Activated CD4-positive, alpha-beta T cell treated with anti-CD3 and anti-CD28 coated beads for 36 hours (primary cell): ENCODE measurements at regions of chr17 and their contacts with region 1.

Region 1: DNA sequence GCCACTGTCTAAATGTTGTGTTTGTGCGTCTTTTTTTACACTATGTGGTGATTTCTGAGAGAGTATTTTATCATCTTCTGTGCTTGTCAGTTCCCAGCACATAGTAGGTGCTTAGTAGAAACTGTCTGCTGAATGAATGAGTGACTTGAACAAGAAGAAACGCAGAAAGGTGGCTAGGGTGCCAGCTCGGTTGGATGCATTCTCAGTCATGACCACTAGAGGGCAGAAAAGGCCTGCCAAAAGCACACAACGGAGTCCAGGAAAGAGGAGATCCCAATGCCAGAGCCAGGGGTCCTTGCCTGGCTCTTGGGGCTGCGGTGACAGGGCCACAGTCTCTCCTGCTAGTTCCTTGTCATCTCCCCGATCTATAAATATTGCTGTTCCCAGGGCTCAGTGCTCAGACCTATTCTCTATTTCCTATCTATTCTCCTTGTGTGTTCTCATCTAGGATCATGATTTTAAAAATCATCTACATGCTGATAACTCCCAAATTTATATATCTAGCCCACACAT is 57.3 kb upstream of the CCL1 start:
- DNase-seq: peak; percentile 78
- ATAC-seq: peak; percentile 55
- H3K4me3 Mint-ChIP-seq: no peak overlapping the region
- H3K27ac Mint-ChIP-seq: no peak overlapping the region
- H3K4me1 Mint-ChIP-seq: no peaks in the 10 kb centered on the region
- H3K27me3 Mint-ChIP-seq: peaks cover 27% of the 10 kb centered on the region

Region 2: DNA sequence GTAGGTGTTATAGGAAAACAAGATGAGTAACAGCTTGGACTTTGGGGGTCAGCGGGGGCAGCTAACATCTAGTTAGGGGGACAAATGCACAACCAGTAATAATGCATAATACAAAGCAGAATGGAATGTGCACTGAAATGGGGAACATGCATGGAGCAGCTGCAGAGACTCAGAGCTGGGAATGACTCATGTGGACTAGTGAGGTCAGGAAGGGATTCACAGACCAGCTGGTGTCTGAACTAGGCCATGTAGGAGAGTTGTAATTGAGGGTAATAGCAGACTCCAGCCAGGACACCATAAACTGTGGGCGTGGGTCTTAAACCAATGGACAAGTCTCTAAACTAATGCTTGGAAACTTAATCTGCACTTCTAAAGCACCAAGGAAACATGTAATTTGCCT is 950.4 kb before region 1 on chr17:
- CTCF ChIA-PET with region 1: no interaction called
- POLR2A ChIA-PET with region 1: no interaction called
- intact Hi-C with region 1: no loop called
- DNase-seq: no peak
- ATAC-seq: no peak
- H3K4me3 Mint-ChIP-seq: no peak overlapping the region
- H3K27ac Mint-ChIP-seq: no peak overlapping the region
- H3K4me1 Mint-ChIP-seq: no peaks in the 10 kb centered on the region
- H3K27me3 Mint-ChIP-seq: peaks cover 9% of the 10 kb centered on the region

Region 3: GRCh38 chr17:33964344-33964979 is 455.8 kb before region 1 on chr17:
- CTCF ChIA-PET with region 1: no interaction called
- POLR2A ChIA-PET with region 1: no interaction called
- intact Hi-C with region 1: no loop called
- DNase-seq: peak; percentile 23
- ATAC-seq: peak; percentile 76
- H3K4me3 Mint-ChIP-seq: no peak overlapping the region
- H3K27ac Mint-ChIP-seq: no peak overlapping the region
- H3K4me1 Mint-ChIP-seq: peaks cover 24% of the 10 kb centered on the region
- H3K27me3 Mint-ChIP-seq: peaks cover 5% of the 10 kb centered on the region

Region 4: DNA sequence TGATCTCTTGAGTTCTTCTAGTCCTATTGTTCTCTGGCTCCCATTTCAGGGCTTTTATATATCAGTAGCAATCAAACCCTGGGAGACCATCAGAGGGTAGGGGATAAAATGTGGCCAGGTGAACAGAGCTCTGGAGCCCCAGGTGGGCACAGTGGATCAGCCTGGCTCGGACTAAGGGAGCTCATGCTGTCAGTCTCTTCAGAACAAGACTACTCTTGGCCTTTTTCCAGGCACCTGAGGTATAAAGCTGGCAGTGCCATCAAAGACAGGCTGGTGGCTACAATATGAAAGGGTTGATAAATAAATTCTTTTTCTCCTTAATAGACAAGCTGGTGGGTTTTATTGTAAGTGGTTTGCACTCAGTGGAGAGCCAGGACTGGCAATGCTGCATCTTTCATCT is 325.2 kb before region 1 on chr17:
- CTCF ChIA-PET with region 1: no interaction called
- POLR2A ChIA-PET with region 1: no interaction called
- intact Hi-C with region 1: no loop called
- DNase-seq: no peak
- ATAC-seq: no peak
- H3K4me3 Mint-ChIP-seq: no peak overlapping the region
- H3K27ac Mint-ChIP-seq: no peak overlapping the region
- H3K4me1 Mint-ChIP-seq: no peaks in the 10 kb centered on the region
- H3K27me3 Mint-ChIP-seq: peaks cover 31% of the 10 kb centered on the region

Region 5: DNA sequence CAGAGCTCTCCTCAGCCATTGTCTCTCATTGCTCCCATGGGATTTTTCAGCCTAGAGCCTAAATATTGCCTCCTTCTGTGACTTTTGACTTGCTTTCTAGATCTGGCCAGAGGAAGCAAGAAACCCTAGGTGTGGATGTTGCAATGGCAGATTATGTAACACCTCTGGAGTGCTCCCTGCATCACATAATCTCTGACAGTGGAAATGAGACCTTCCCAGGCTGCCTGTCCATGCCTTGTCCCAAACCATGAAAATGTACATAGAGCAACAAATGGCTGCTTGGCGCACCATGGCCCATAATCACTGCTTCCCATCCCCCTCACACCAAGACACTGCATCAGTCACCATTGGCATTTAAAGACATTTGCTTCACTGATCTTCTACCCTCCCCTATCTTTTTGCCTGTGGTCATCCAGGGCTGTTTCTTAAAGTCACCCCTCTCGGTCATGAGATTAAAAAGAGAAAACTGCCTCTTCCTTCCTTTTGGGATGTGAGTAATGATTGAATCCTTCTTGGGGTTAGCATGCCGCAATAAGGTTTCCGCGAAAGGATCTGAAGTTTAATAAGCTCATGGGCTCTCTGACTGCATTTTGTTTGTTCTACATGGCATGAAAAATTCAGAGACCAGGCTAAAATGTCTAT is 199.4 kb before region 1 on chr17:
- CTCF ChIA-PET with region 1: no interaction called
- POLR2A ChIA-PET with region 1: no interaction called
- intact Hi-C with region 1: no loop called
- DNase-seq: no peak
- ATAC-seq: no peak
- H3K4me3 Mint-ChIP-seq: no peak overlapping the region
- H3K27ac Mint-ChIP-seq: no peak overlapping the region
- H3K4me1 Mint-ChIP-seq: no peaks in the 10 kb centered on the region
- H3K27me3 Mint-ChIP-seq: peaks cover 34% of the 10 kb centered on the region

Region 6: DNA sequence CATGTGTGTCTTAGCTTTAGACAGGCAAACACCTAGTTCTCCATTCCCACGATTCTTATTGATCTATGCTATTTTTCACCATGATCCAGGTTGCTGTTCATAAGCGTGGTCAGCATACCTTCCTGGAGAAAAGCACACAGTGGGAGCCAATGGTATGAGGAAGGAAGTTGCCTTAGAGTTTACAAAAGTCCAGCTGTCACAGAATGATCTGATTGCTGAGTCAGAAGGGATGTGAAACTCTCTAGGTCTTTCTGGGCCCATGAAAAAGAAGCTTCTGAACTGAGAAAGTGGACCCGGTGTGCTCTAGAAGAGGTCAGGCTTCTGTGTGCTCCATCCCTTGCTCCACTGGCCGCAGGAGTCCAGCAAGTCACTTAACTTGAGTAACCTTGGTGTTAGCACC is 13.7 kb after region 1 on chr17:
- CTCF ChIA-PET with region 1: interaction called, 14 read pairs
- POLR2A ChIA-PET with region 1: no interaction called
- intact Hi-C with region 1: no loop called
- DNase-seq: no peak
- ATAC-seq: no peak
- H3K4me3 Mint-ChIP-seq: no peak overlapping the region
- H3K27ac Mint-ChIP-seq: no peak overlapping the region
- H3K4me1 Mint-ChIP-seq: no peaks in the 10 kb centered on the region
- H3K27me3 Mint-ChIP-seq: peaks cover 2% of the 10 kb centered on the region

Region 7: DNA sequence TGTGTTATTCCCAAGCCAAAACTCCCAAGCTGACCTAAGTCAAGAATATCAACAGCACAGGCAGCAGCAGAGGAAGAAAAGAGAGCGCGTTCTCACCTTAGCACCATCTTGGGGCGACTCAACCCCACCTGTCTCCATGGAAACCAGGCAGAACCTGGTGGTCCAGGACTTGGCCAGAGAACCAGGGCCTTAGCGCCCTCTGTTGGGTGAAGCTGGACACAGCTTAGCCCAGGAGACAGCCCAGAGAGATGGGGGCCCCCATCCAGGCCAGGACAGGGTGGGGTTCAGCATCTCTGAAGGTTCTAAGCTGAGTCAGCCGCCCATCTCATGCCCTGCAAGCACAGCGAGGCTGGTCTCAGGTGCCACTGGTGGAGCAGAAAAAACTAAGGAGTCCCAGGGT is 99.0 kb after region 1 on chr17:
- CTCF ChIA-PET with region 1: interaction called, 3 read pairs
- POLR2A ChIA-PET with region 1: no interaction called
- intact Hi-C with region 1: loop called (anchors 1 to 5 kb)
- DNase-seq: peak; percentile 44
- ATAC-seq: peak; percentile 51
- H3K4me3 Mint-ChIP-seq: no peak overlapping the region
- H3K27ac Mint-ChIP-seq: no peak overlapping the region
- H3K4me1 Mint-ChIP-seq: no peaks in the 10 kb centered on the region
- H3K27me3 Mint-ChIP-seq: peaks cover 7% of the 10 kb centered on the region

Region 8: GRCh38 chr17:34637548-34638525 is 217.5 kb after region 1 on chr17:
- CTCF ChIA-PET with region 1: interaction called, 7 read pairs
- POLR2A ChIA-PET with region 1: no interaction called
- intact Hi-C with region 1: loop called (anchors 1 kb)
- DNase-seq: peak; percentile 91
- ATAC-seq: peak; percentile 99
- H3K4me3 Mint-ChIP-seq: peak overlapping the region; percentile 56
- H3K27ac Mint-ChIP-seq: peak overlapping the region; percentile 29
- H3K4me1 Mint-ChIP-seq: peaks cover 4% of the 10 kb centered on the region
- H3K27me3 Mint-ChIP-seq: peaks cover 6% of the 10 kb centered on the region

Region 9: DNA sequence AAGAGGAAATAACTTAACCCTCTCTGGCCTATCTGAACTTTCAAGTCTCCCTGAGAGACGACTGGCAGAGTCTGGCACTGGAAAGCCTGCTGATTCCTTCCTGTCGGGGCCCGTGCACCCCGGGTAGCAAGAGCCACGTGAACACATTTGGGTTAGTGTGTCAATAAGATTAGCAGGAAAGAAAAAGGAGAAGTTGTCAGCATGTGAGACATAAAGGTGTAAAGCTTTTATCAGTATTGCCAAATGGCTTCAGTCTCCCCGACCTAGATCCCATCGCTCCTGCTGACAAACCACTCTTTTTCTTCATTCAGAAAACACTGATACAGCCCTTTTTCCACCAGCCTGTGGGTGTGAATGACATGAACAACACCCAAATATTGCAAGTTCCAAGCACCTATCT is 466.5 kb after region 1 on chr17:
- CTCF ChIA-PET with region 1: no interaction called
- POLR2A ChIA-PET with region 1: no interaction called
- intact Hi-C with region 1: loop called in 1 of 2 experiments (anchors 10 kb)
- DNase-seq: no peak
- ATAC-seq: no peak
- H3K4me3 Mint-ChIP-seq: no peak overlapping the region
- H3K27ac Mint-ChIP-seq: no peak overlapping the region
- H3K4me1 Mint-ChIP-seq: peaks cover 5% of the 10 kb centered on the region
- H3K27me3 Mint-ChIP-seq: peaks cover 11% of the 10 kb centered on the region